Thyroid gland (tissue), 4 donors: ENCODE measurements at regions of chr3 and their contacts with region 1.

Region 1: DNA sequence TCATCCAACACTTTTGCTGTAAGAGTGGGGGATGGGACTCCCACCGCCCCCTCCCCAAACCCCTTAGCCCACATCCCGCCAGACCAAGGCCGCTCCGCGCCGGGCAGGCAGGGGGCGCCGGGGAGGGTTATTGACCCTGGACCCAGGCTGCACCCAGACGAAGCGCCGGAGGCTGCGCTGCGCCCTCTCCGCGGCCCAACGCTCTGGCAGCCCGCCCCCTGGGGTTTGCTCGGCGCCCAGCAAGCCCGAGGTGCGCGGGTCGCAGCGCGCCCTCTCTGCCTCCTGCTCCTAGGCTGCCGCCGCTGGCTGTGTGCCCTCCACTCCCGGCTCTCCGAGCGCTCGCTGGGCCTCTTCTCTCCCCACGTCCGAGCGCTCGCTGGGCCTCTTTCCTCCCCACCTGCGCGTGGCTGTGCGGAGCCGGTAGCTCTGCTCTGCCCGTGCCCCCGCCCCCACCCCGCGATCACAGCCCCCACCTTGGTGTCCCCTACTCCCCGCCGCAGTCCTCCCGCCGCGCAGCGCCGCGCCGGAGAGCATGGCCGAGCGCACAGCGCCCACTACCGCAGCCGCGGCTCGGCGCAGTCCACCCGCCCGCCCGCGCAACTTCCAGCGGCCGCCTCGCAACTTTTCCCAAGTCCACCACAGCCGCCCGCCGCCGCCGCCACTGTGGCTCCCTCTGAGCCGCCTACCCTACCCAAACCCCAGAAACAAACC is 1.2 kb downstream of the MECOM start:
- DNase-seq: peak; percentile 54 to 58
- H3K4me3 ChIP-seq: peak overlapping the region in 2 of 3 donors; percentile 38 to 50
- H3K27ac ChIP-seq: peak overlapping the region in 2 of 3 donors; percentile 60 to 70
- H3K4me1 ChIP-seq: peaks cover 19 to 32% of the 10 kb centered on the region in 2 donors
- H3K27me3 ChIP-seq: peaks cover 38% of the 10 kb centered on the region
- CTCF ChIP-seq: peak in 4 of 6 experiments; percentile 16 to 63 (median 32)
- POLR2A ChIP-seq: no peak

Region 2: DNA sequence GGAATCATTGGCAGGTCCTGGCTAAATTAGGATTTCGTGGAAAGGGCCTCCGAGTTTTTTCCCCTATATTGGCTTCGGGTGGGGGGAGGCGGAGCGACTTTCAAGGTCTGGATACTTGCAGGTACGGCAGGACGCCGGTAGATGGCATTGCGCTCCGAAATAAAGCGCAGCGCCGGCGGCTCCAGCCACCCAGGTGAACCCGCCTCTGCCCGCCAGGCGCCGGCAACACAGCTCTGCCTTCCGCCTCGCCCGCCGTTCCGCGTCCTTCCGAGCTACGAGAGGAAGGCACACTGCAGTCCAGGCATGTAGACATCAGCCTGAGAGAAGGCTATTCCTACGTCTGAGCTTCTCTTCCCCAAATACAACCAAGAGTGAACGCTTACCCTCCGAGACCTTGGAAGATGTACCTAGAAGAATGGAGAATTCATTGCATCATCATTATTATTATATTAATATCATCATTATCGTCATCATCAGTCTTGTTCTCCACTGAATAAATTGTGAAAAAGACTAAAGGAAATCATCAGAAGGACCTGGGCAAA is 512.9 kb before region 1 on chr3:
- intact Hi-C with region 1: loop called (anchors 5 kb)
- DNase-seq: peak; percentile 85 to 89
- H3K4me3 ChIP-seq: no peak overlapping the region
- H3K27ac ChIP-seq: no peak overlapping the region
- H3K4me1 ChIP-seq: peaks cover 12 to 23% of the 10 kb centered on the region in 2 donors
- H3K27me3 ChIP-seq: peaks cover 9% of the 10 kb centered on the region
- CTCF ChIP-seq: peak; percentile 53 to 92 (median 80)
- POLR2A ChIP-seq: no peak